GM10248 (cell line): ENCODE measurements at regions of chr10 and their contacts with region 1.

Region 1: GRCh38 chr10:80891252-80891651 is 353.6 kb downstream of the SH2D4B start:
- DNase-seq: no peak
- CTCF ChIP-seq: no peak

Region 2: GRCh38 chr10:80878330-80878729 is 12.9 kb before region 1 on chr10:
- CTCF ChIA-PET with region 1: interaction called, 10 read pairs
- POLR2A ChIA-PET with region 1: no interaction called
- DNase-seq: no peak
- CTCF ChIP-seq: no peak